ENCODE measurements at regions of chr11 and their contacts with region 1.

Region 1: DNA sequence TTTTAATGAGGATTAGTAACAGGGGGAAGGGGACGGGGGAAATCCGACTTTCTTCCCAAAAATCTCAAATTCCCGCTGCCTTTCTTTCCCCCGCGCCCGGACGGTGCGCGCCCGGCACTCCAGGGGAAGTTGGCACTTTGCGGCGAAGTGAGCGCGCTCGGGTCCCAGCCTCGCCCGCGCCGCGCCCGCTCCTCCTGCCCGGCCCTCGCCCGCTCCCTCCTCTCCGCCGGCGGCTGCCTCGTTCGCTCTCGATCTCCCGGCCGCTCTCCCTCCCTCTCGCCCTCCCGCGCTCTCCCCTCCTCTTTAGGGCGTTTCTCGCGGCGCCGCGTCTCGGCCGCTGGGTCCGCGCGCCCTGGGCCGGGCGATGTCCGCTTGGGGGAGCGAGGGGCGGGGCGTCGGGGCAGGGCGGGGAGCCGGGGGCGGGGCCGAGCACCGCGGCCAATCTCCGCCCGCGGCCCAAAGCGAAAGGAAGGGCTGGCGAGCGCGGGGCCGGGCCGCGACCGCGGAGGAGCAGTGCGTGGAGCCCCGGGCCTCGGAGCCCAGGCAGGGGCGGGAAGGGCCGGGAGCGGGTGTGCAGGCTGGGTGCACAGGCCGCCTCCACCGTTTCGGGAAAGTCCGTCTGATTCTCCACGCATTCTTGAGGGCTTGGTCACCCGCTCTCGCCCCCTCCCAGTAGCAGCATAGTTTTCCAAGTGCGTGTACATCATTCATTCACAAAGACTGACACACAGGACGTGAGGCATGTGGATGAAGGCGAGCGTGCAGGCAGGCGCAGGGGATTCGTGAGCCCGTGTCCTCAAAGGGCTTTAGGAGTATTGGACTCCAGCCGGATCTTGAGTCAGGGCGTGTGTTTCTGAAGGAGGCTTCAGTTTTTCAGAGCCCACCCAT is 65.1 kb downstream of the ETS1 start:
- DNase-seq: peak; percentile 95 to 96
- ATAC-seq: peak; percentile 93 to 99 (median 96)
- H3K4me3 ChIP-seq: peak overlapping the region; percentile 67 to 92 (median 81)
- H3K27ac ChIP-seq: peak overlapping the region; percentile 91 to 99 (median 98)
- H3K4me1 ChIP-seq: peaks cover 6 to 80% (median 66%) of the 10 kb centered on the region in 9 donors
- H3K27me3 ChIP-seq: no peaks in the 10 kb centered on the region
- CTCF ChIP-seq: peak in 1 of 9 donors; percentile 8

Region 2: DNA sequence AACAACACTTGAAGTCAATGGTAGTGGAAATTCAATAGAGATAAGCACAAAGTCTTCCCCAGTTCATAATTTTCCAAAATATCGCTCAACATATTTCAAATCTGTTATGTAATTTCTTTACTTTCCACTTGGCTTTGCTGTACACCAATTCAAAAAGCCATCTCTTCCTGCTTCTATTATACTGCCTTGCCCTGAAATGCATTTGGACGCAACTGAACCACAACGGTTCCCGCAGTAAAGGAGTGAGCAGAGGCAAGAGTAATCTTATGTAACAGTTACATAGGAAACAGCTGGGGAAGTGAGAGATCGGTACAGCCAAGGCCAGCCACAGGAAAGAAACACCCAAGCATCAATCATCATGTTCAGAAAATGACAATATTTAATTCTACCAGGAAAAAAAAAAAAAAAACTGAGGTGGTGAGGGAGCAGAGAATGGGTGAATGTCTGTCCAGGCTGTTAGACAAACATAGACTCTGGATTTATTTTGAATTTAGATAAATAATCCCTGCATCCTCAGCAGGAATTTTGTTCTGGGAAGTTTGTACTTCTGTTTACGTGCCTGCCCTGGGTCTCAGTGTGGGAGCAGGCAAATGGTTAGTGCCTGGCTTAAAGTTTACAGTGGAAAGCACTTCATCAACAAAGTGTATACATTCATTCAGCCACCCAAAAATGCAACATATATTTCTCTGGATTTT is 327.1 kb before region 1 on chr11:
- intact Hi-C with region 1: no loop called
- DNase-seq: no peak
- ATAC-seq: peak in 7 of 8 donors; percentile 55 to 87 (median 72)
- H3K4me3 ChIP-seq: no peak overlapping the region
- H3K27ac ChIP-seq: peak overlapping the region in 2 of 10 donors; percentile 4 to 17
- H3K4me1 ChIP-seq: peaks cover 0 to 28% (median 10%) of the 10 kb centered on the region in 9 donors
- H3K27me3 ChIP-seq: no peaks in the 10 kb centered on the region
- CTCF ChIP-seq: peak in 3 of 9 donors; percentile 6 to 35 (median 22)

Region 3: DNA sequence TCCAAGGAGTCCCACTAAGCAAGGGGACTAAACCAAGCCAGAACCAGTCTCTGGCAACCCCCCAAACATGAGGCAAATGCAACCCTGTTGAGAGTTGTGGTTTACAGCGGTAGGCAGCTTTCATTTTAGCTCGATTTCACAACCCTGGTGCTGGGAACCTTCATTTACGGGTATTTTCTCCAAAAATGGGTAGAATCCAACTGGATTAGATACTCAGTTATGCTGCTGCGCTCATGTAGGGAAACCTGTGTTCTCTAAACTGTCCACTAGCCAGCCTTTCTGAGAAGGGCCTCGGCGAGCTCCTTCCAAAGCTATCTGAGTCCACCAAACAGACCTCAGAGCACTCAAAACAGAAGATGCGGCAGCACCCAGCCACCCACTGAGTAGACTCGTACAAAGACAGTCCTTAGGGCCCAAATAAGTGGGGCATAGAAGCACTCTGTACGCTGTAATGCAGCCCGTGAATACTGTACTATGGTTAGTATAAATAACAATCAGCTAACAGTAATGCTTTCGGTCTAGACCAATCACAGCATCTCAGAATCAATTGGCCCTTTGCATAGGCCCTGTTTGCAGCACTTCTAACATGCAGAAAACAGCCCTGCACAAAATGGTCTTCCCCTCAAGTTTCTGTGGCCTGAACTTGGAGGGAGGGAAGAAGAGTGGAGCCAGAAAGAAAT is 39.6 kb before region 1 on chr11:
- intact Hi-C with region 1: loop called in 4 of 10 experiments (anchors 5 to 10 kb)
- DNase-seq: no peak
- ATAC-seq: peak; percentile 19 to 50 (median 26)
- H3K4me3 ChIP-seq: peak overlapping the region in 2 of 10 donors; percentile 10 to 14
- H3K27ac ChIP-seq: peak overlapping the region; percentile 19 to 79 (median 66)
- H3K4me1 ChIP-seq: peaks cover 9 to 97% (median 83%) of the 10 kb centered on the region in 9 donors
- H3K27me3 ChIP-seq: no peaks in the 10 kb centered on the region
- CTCF ChIP-seq: no peak

Region 4: GRCh38 chr11:128488471-128488870 is 33.8 kb before region 1 on chr11:
- intact Hi-C with region 1: loop called in 3 of 10 experiments (anchors 5 kb)
- DNase-seq: no peak
- ATAC-seq: peak in 6 of 8 donors; percentile 56 to 95 (median 69)
- H3K4me3 ChIP-seq: no peak overlapping the region
- H3K27ac ChIP-seq: peak overlapping the region in 9 of 10 donors; percentile 17 to 74 (median 57)
- H3K4me1 ChIP-seq: peaks cover 6 to 98% (median 84%) of the 10 kb centered on the region in 9 donors
- H3K27me3 ChIP-seq: no peaks in the 10 kb centered on the region
- CTCF ChIP-seq: no peak

Region 5: DNA sequence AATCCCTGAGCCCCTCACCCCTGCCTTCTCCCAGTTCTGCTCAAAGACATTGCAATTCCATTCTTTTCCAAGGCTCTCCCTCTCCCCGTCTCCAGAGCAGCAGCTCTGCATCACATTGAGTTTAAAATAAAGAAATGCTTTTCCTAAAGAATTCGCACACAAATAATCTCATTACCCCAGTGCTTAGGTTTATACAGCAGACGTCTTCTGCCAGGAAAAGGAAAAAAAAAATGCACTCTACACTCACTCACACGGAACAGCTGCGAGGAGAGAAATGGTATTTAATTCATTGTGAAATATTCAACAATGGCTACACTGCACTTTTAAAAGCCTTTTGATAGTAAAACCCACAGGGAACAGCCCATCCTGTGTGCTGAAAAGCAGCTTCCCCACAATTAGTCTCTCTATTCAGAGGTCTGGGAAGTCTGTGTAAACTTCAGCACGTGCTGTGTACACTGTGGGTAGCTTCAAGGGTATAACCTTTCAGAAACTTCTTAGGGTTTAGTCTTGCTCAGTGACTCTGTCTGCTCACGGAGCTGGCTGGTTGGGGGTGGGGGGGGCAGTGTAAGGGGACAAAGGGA is 22.3 kb after region 1 on chr11:
- intact Hi-C with region 1: loop called in 3 of 10 experiments (anchors 1 to 2 kb)
- DNase-seq: no peak
- ATAC-seq: peak in 6 of 8 donors; percentile 5 to 48 (median 16)
- H3K4me3 ChIP-seq: no peak overlapping the region
- H3K27ac ChIP-seq: peak overlapping the region in 8 of 10 donors; percentile 1 to 92 (median 58)
- H3K4me1 ChIP-seq: peaks cover 5 to 74% (median 52%) of the 10 kb centered on the region in 9 donors
- H3K27me3 ChIP-seq: no peaks in the 10 kb centered on the region
- CTCF ChIP-seq: no peak

Region 6: GRCh38 chr11:128552783-128553661 is 30.7 kb after region 1 on chr11:
- intact Hi-C with region 1: loop called in 3 of 10 experiments (anchors 1 to 2 kb)
- DNase-seq: no peak
- ATAC-seq: peak in 3 of 8 donors; percentile 2 to 54 (median 23)
- H3K4me3 ChIP-seq: no peak overlapping the region
- H3K27ac ChIP-seq: peak overlapping the region in 7 of 10 donors; percentile 34 to 85 (median 50)
- H3K4me1 ChIP-seq: peaks cover 3 to 76% (median 56%) of the 10 kb centered on the region in 9 donors
- H3K27me3 ChIP-seq: no peaks in the 10 kb centered on the region
- CTCF ChIP-seq: no peak

Region 7: GRCh38 chr11:128568166-128568778 is 46.0 kb after region 1 on chr11:
- intact Hi-C with region 1: no loop called
- DNase-seq: peak in 1 of 2 donors; percentile 70
- ATAC-seq: peak; percentile 65 to 95 (median 88)
- H3K4me3 ChIP-seq: no peak overlapping the region
- H3K27ac ChIP-seq: peak overlapping the region; percentile 55 to 82 (median 68)
- H3K4me1 ChIP-seq: peaks cover 3 to 74% (median 38%) of the 10 kb centered on the region in 9 donors
- H3K27me3 ChIP-seq: no peaks in the 10 kb centered on the region
- CTCF ChIP-seq: no peak

Region 8: GRCh38 chr11:128582496-128583366 is 60.4 kb after region 1 on chr11:
- intact Hi-C with region 1: loop called in 1 of 10 experiments (anchors 10 kb)
- DNase-seq: peak in 1 of 2 donors; percentile 34
- ATAC-seq: peak; percentile 42 to 90 (median 67)
- H3K4me3 ChIP-seq: no peak overlapping the region
- H3K27ac ChIP-seq: peak overlapping the region in 5 of 10 donors; percentile 1 to 50 (median 29)
- H3K4me1 ChIP-seq: peaks cover 0 to 85% (median 45%) of the 10 kb centered on the region in 9 donors
- H3K27me3 ChIP-seq: no peaks in the 10 kb centered on the region
- CTCF ChIP-seq: no peak

Region 9: GRCh38 chr11:128643661-128644317 is 121.5 kb after region 1 on chr11:
- intact Hi-C with region 1: no loop called
- DNase-seq: no peak
- ATAC-seq: no peak
- H3K4me3 ChIP-seq: no peak overlapping the region
- H3K27ac ChIP-seq: no peak overlapping the region
- H3K4me1 ChIP-seq: peaks cover 0 to 15% (median 0%) of the 10 kb centered on the region in 9 donors
- H3K27me3 ChIP-seq: no peaks in the 10 kb centered on the region
- CTCF ChIP-seq: no peak

Measured in heart right ventricle (tissue), 16 donors.